Dorsolateral prefrontal cortex (tissue), 120 donors: ENCODE measurements at regions of chr20 and their contacts with region 1.

Region 1: GRCh38 chr20:3786665-3787323 is at the start of gene CENPB:
- DNase-seq: peak; percentile 79 to 94 (median 86)
- H3K4me3 ChIP-seq: peak within 1 kb of the TSS; percentile 42 to 88 (median 70)
- H3K27ac ChIP-seq: peak within 1 kb of the TSS; percentile 15 to 92 (median 82)
- H3K27me3 ChIP-seq: no peaks in the 10 kb centered on the region
- CTCF ChIP-seq: peak; percentile 50 to 97 (median 83)
- total RNA-seq, gene CENPB: 53.5 to 178 (median 74.0) TPM

Region 2: GRCh38 chr20:3767427-3768341 is 19.1 kb before region 1 on chr20 and contains the start of gene ADISSP:
- intact Hi-C with region 1: loop called in 1 of 2 experiments (anchors 2 kb)
- DNase-seq: peak; percentile 97 to 100 (median 99)
- H3K4me3 ChIP-seq: peak within 1 kb of the TSS; percentile 52 to 99 (median 84)
- H3K27ac ChIP-seq: peak within 1 kb of the TSS; percentile 75 to 97 (median 93)
- H3K27me3 ChIP-seq: no peaks in the 10 kb centered on the region
- CTCF ChIP-seq: peak in 47 of 56 donors; percentile 7 to 66 (median 39)
- total RNA-seq, gene ADISSP: 19.0 to 45.5 (median 31.1) TPM

Region 3: DNA sequence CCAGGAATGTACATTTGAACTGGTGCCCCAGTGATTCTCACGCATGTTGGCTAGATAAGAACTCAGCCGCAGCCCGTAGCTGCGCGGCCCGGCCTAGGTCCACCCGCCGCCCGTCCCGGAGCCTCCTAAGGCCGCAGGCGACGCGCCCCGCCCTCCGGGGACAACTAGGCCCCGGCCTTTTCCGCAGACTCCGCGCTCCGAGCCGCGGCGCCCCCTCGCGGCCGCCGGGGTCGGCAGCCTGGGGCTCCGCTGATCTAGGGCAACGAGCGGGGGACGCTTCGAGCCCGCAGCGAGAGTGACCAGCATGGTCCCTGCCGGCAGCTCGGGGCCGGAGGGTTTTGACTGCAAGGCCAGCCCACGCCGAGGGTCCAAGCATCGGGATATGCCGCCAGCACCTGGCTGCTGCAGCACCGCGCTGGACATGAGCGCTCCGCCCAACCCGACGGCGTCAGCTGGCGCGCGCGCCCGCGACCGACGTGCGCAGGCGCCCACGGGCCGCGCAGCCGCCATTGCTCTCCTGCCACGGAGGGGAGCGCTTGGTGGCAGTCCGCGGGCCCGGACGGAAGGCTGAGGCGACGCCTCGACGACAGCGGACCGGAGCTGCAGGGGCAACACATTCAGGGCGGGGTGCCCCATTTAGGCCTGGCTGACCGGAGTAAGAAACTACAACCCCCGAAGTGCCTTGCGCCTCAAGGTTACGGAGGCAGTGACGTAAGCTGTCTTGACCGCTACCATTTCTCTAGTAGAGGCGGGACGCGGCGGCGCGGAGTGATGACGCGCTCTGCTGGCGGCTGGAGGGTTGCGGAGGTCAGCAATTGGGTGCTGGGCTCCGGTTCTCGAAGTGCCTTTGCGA is 33.5 kb after region 1 on chr20 and contains the start of gene AP5S1:
- intact Hi-C with region 1: loop called (anchors 1 kb)
- DNase-seq: peak; percentile 95 to 98 (median 97)
- H3K4me3 ChIP-seq: peak within 1 kb of the TSS; percentile 47 to 96 (median 80)
- H3K27ac ChIP-seq: peak within 1 kb of the TSS; percentile 94 to 100 (median 100)
- H3K27me3 ChIP-seq: no peaks in the 10 kb centered on the region
- CTCF ChIP-seq: peak in 55 of 56 donors; percentile 86 to 100 (median 99)
- total RNA-seq, gene AP5S1: 9.8 to 22.0 (median 15.9) TPM

Region 4: DNA sequence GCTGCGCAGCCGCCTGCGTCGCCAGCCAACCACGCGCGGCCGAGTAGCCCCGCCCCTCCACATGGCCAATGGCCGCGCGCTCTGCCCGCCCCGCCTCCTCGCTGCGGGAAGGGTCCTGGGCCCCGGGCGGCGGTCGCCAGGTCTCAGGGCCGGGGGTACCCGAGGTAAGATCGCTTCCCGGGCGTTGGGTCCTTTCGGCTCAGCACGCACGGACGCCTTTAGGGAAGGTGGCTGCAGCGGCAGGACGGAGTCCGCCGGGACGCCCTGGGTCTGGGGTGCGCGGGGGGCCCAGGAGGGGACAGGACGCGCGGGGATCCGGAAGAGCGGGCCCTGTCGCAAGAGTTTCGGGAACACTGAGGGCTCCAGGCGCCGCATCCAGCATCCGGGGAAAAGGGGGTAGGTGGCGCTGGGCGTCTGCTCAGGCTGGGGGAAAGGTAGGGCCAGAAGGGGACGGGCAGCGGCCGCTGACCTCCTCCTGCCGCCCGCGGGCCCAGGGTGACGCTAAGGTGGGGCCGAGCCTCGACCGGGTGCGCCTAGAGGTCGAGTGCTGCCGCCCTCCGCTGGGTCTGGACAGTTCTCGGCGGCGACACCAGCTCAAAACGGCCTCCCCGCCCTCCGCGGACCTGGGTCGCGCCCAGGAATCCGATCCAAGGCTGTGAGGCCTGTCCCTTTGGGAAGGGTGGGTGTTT is 60.1 kb after region 1 on chr20 and contains the start of gene MAVS:
- intact Hi-C with region 1: loop called in 1 of 2 experiments (anchors 2 kb)
- DNase-seq: peak; percentile 76 to 95 (median 86)
- H3K4me3 ChIP-seq: peak within 1 kb of the TSS; percentile 52 to 100 (median 98)
- H3K27ac ChIP-seq: peak within 1 kb of the TSS; percentile 42 to 97 (median 92)
- H3K27me3 ChIP-seq: no peaks in the 10 kb centered on the region
- CTCF ChIP-seq: peak in 27 of 56 donors; percentile 4 to 45 (median 17)
- total RNA-seq, gene MAVS: 17.4 to 50.9 (median 25.6) TPM